CD8-positive, alpha-beta T cell (primary cell): ENCODE measurements at regions of chr5 and their contacts with region 1.

Region 1: DNA sequence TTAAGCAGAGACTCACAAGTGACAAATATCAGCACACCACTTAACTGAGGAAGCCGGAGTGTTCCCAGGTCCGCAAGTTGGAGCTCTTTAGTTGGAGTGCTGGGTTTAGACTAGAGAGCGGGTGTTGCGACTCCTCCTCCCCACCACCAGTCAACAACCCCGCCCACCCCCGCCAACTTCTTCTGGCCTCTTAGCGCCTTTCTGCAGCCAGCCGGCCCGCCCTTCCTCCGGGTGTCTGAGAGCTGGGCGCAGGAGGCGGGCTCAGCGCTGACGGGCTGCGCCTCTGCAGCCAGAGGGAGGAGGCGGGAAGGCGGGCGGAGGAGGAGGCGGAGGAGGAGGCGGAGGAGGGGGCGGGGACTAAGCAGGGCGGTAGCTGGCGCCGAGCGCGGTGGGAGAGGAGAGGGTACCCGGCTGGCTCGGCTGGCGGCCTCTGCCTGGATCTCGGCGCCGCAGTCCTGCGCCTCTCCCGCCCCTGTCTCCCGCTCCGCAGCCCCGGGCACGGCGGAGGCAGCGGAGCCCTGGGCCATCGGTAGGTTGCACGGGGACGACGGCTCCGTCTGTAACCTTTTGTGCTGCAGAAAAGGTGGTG is at the start of gene MACIR:
- DNase-seq: peak; percentile 88 to 98 (median 94)
- ATAC-seq: peak; percentile 93
- H3K4me3 ChIP-seq: peak within 1 kb of the TSS; percentile 80 to 83
- H3K4me3 Mint-ChIP-seq: peak within 1 kb of the TSS; percentile 88
- H3K27ac ChIP-seq: peak within 1 kb of the TSS; percentile 30 to 44
- H3K27ac Mint-ChIP-seq: peak within 1 kb of the TSS; percentile 76
- H3K4me1 ChIP-seq: peaks cover 11% of the 10 kb centered on the region
- H3K4me1 Mint-ChIP-seq: peaks cover 17% of the 10 kb centered on the region
- H3K27me3 ChIP-seq: peaks cover 0 to 4% of the 10 kb centered on the region in 2 experiments
- H3K27me3 Mint-ChIP-seq: peaks cover 12% of the 10 kb centered on the region
- CTCF ChIP-seq: no peak
- total RNA-seq, gene MACIR: 1.5 TPM

Region 2: DNA sequence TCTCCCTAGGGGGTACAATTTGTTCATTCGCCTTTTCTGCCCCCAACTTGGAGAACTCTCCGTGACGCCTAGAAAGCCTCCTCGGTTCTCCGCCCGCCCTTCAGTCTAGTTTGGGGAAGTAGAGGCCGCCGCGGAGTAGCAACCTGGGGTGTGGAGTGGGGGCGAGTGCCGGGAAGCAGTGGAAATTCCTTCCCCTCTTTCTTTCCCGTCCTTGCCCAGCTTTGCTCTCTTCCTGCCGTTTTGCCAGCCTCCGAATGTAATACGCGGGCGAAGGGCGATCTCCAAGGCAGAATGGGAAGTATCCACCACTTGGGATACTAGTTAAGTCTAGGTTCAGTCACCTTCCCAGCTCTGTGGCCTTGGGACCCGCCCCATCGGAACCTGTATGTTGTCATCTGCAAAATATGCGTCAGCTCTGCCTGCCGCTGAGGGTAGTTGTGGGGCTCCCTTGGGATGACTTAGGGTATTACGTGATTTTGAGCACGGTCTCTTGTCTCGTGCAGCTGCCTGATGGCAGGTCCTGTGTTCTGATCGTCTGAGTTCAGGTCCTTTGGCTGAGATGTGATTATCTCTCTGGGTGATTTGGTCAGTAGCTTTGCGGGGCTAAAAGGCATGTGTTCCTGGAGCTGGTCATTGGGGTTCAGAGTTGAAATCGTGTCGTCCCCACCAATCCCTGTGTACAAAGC is 502.6 kb before region 1 on chr5:
- CTCF ChIA-PET with region 1: no interaction called
- POLR2A ChIA-PET with region 1: no interaction called
- intact Hi-C with region 1: loop called (anchors 5 to 10 kb)
- DNase-seq: peak; percentile 31 to 88 (median 67)
- ATAC-seq: peak; percentile 88
- H3K4me3 ChIP-seq: peak overlapping the region; percentile 77 to 85
- H3K4me3 Mint-ChIP-seq: peak overlapping the region; percentile 91
- H3K27ac ChIP-seq: peak overlapping the region; percentile 60 to 74
- H3K27ac Mint-ChIP-seq: peak overlapping the region; percentile 69
- H3K4me1 ChIP-seq: peaks cover 14% of the 10 kb centered on the region
- H3K4me1 Mint-ChIP-seq: peaks cover 48% of the 10 kb centered on the region
- H3K27me3 ChIP-seq: no peaks in the 10 kb centered on the region
- H3K27me3 Mint-ChIP-seq: peaks cover 9% of the 10 kb centered on the region
- CTCF ChIP-seq: no peak

Region 3: DNA sequence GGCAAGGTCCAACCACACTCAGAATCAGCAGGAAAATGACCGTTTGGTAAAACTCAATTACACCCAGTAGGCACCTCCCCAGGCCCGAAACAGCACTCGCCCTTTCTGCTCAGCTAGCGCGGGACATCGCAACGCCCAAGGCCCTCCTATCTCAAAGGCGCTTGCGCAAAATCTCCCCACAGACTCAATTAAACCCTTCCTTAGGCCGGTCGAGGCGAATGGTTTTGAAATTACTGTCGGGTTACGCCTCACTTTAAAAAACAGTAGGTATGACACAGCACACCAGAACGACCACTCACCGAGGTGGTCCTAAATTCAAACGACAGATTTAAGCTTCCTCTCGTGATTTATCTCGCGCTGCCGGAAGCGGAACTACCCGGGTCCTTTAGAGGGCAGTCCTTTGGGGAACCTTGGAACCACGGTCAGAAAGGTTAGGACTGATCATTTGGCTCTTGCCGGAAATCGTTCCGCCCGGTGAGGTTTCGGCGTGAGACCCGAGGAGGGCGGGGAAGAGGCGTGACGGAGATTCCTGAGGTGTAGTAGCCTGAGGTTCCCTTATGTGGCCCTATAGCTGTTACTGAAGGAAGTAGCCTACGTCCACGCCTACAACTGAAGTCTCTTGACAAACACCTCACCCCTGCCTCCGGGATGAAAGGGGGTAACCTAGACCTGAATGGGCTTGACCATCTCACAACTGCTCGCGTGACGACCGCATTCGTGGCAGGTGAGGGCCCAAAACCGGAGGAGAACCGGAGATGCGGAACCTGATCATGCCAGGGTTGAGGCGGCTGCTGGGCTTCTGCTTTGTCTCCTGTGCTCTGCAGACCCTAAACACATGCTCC is 138.5 kb before region 1 on chr5 and contains the starts of genes GIN1 and PPIP5K2:
- CTCF ChIA-PET with region 1: no interaction called
- POLR2A ChIA-PET with region 1: interaction called, 11 read pairs
- intact Hi-C with region 1: loop called (anchors 1 to 2 kb)
- DNase-seq: peak; percentile 96 to 98 (median 97)
- ATAC-seq: peak; percentile 90
- H3K4me3 ChIP-seq: peak within 1 kb of the TSS; percentile 77 to 83
- H3K4me3 Mint-ChIP-seq: peak within 1 kb of the TSS; percentile 94
- H3K27ac ChIP-seq: peak within 1 kb of the TSS; percentile 85 to 94
- H3K27ac Mint-ChIP-seq: peak within 1 kb of the TSS; percentile 98
- H3K4me1 ChIP-seq: peaks cover 33% of the 10 kb centered on the region
- H3K4me1 Mint-ChIP-seq: peaks cover 53% of the 10 kb centered on the region
- H3K27me3 ChIP-seq: no peaks in the 10 kb centered on the region
- H3K27me3 Mint-ChIP-seq: no peaks in the 10 kb centered on the region
- CTCF ChIP-seq: no peak
- total RNA-seq, gene GIN1: 1.5 to 1.6 TPM
- total RNA-seq, gene PPIP5K2: 43.4 to 51.1 TPM

Region 4: DNA sequence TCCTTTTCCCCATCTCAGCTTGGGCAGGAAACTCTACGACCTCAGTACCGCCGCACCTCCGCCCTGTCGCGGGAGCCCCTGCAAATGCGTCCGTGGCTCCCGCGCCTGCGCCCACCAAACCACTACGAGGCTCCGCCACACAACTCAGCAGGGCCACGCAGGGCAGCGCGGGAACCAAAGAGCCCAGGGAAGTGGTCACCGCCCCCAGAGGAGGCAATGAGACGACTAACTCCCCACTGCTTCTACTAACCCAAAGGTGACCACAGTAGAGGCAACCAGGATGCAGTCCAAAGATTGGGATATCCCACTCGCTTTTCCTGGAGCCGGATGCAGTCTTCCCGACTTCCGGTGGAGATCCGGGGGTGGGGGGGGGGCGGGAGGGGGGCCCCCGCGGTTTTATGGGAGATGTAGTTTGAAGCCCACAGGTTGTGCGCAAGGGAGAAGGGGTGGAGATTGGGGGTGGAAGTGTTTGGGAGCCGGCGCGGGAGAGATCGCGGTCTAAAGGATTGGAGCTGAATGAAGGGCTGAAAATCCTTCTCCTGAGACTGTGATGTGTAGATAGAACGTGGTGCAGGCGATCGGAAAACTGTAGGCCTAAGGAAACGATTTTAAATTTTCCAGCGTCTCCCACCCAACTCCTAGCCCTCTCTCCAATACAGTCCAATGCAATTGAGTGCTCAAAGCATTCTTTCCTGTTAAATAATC is 304.1 kb after region 1 on chr5 and contains the start of gene NUDT12:
- CTCF ChIA-PET with region 1: no interaction called
- POLR2A ChIA-PET with region 1: interaction called, 3 read pairs
- intact Hi-C with region 1: loop called in 1 of 2 experiments (anchors 5 kb)
- DNase-seq: peak in 8 of 9 experiments; percentile 7 to 69 (median 44)
- ATAC-seq: peak; percentile 79
- H3K4me3 ChIP-seq: peak within 1 kb of the TSS; percentile 53 to 66
- H3K4me3 Mint-ChIP-seq: peak within 1 kb of the TSS; percentile 94
- H3K27ac ChIP-seq: peak within 1 kb of the TSS in 1 of 2 experiments; percentile 38
- H3K27ac Mint-ChIP-seq: peak within 1 kb of the TSS; percentile 85
- H3K4me1 ChIP-seq: peaks cover 5% of the 10 kb centered on the region
- H3K4me1 Mint-ChIP-seq: peaks cover 20% of the 10 kb centered on the region
- H3K27me3 ChIP-seq: no peaks in the 10 kb centered on the region
- H3K27me3 Mint-ChIP-seq: no peaks in the 10 kb centered on the region
- CTCF ChIP-seq: no peak
- total RNA-seq, gene NUDT12: 0.44 TPM in 1 of 2 experiments, not detected in the other